Caco-2 (cell line): ENCODE measurements at regions of chr4 and their contacts with region 1.

Region 1: DNA sequence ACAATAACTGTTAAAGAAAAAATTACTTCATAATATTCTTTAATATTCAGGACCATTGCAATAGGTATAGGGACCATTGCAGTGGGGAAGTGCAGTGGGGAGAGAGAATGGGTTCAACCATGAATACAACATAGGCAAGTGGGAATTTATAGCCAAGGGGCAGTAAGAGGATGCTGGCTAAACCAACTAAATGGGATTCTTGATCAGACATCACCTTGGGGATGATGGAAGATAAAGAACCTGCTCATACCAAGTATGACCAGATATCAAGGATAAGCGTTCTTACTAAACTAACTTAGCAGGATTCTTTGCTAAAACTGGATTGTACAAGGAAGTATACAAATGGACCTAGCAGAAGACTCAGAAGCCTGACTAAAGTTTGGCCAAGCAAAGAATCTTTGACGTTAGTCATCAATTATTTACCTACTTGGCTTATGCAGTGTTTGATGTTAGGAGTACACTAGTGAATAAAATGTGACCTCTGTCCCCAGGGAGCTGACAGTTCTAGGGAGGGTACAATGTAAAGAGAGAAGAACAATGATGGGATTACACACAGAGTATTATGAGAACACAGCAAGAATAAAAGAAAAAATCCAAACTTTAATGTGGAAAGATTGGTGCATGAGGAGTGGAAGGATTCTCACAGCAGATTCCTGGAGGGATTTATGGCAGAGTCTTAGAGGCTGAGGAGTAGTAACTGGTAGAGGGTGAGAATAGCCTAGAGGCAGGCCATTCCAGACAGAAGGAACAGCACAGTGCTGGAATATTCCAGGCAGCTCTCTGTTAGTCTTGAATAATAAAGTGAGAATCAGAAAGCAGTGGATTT is 54.7 kb upstream of the MYOZ2 start:
- DNase-seq: peak; percentile 80 to 82
- H3K4me3 ChIP-seq: no peak overlapping the region
- H3K4me3 Mint-ChIP-seq: peak overlapping the region; percentile 34
- H3K27ac Mint-ChIP-seq: peak overlapping the region; percentile 86
- H3K4me1 ChIP-seq: peaks cover 37% of the 10 kb centered on the region
- H3K4me1 Mint-ChIP-seq: peaks cover 23% of the 10 kb centered on the region
- H3K27me3 ChIP-seq: no peaks in the 10 kb centered on the region
- H3K27me3 Mint-ChIP-seq: no peaks in the 10 kb centered on the region
- CTCF ChIP-seq: no peak

Region 2: GRCh38 chr4:119041951-119042560 is 38.9 kb before region 1 on chr4:
- CTCF ChIA-PET with region 1: interaction called, 4 read pairs
- POLR2A ChIA-PET with region 1: no interaction called
- intact Hi-C with region 1: loop called (anchors 1 kb)
- DNase-seq: peak; percentile 72 to 78
- H3K4me3 ChIP-seq: no peak overlapping the region
- H3K4me3 Mint-ChIP-seq: no peak overlapping the region
- H3K27ac Mint-ChIP-seq: no peak overlapping the region
- H3K4me1 ChIP-seq: peaks cover 10% of the 10 kb centered on the region
- H3K4me1 Mint-ChIP-seq: peaks cover 20% of the 10 kb centered on the region
- H3K27me3 ChIP-seq: no peaks in the 10 kb centered on the region
- H3K27me3 Mint-ChIP-seq: no peaks in the 10 kb centered on the region
- CTCF ChIP-seq: peak; percentile 62 to 77

Region 3: GRCh38 chr4:119103263-119103662 is 22.3 kb after region 1 on chr4:
- CTCF ChIA-PET with region 1: no interaction called
- POLR2A ChIA-PET with region 1: no interaction called
- intact Hi-C with region 1: loop called (anchors 1 kb)
- DNase-seq: peak in 1 of 2 experiments; percentile 38
- H3K4me3 ChIP-seq: no peak overlapping the region
- H3K4me3 Mint-ChIP-seq: no peak overlapping the region
- H3K27ac Mint-ChIP-seq: peak overlapping the region; percentile 86
- H3K4me1 ChIP-seq: peaks cover 44% of the 10 kb centered on the region
- H3K4me1 Mint-ChIP-seq: peaks cover 18% of the 10 kb centered on the region
- H3K27me3 ChIP-seq: no peaks in the 10 kb centered on the region
- H3K27me3 Mint-ChIP-seq: no peaks in the 10 kb centered on the region
- CTCF ChIP-seq: no peak

Region 4: GRCh38 chr4:119130365-119131065 is 49.6 kb after region 1 on chr4:
- CTCF ChIA-PET with region 1: no interaction called
- POLR2A ChIA-PET with region 1: no interaction called
- intact Hi-C with region 1: loop called (anchors 2 kb)
- DNase-seq: no peak
- H3K4me3 ChIP-seq: no peak overlapping the region
- H3K4me3 Mint-ChIP-seq: peak overlapping the region; percentile 69
- H3K27ac Mint-ChIP-seq: peak overlapping the region; percentile 96
- H3K4me1 ChIP-seq: peaks cover 34% of the 10 kb centered on the region
- H3K4me1 Mint-ChIP-seq: peaks cover 44% of the 10 kb centered on the region
- H3K27me3 ChIP-seq: no peaks in the 10 kb centered on the region
- H3K27me3 Mint-ChIP-seq: no peaks in the 10 kb centered on the region
- CTCF ChIP-seq: no peak

Region 5: DNA sequence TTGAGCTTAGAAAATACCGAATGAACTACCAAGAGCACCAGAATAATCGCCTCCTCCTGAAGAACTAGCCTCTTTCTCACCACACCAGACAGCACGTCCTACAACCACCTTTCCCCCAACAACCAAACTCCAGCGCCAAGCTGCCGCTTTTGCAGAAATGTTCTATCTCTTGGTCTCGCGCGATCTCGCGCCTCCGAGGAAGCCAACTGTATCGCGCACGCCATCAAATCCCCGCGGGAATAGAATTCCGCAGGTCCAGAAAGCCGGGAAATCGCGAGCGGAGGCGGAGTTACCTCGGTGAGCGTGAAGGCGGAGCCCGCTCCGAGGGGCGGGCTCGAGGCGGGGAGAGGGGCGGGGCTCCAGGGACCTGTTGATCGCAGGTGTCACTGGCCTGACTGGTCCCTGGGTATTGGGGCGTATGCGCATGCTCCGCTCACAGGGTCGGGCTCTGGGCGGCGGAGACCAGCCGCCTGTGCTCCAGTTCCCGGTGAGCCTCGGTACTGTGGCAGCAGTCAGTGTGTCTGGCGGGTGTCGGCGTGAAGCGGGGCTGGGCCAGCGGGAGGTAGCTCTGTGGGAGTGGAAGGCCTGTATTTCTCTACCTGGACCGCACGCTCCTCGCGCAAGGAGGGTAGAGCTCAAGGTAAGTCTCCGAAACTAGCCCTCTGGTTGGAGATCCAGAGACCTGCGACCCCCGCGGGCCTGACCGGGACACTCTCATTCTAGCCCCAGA is 131.5 kb after region 1 on chr4 and contains the start of gene USP53:
- CTCF ChIA-PET with region 1: interaction called, 4 read pairs
- POLR2A ChIA-PET with region 1: interaction called, 4 read pairs
- intact Hi-C with region 1: loop called (anchors 1 kb)
- DNase-seq: peak; percentile 98 to 99
- H3K4me3 ChIP-seq: peak within 1 kb of the TSS; percentile 77
- H3K4me3 Mint-ChIP-seq: peak within 1 kb of the TSS; percentile 95
- H3K27ac Mint-ChIP-seq: peak within 1 kb of the TSS; percentile 99
- H3K4me1 ChIP-seq: peaks cover 12% of the 10 kb centered on the region
- H3K4me1 Mint-ChIP-seq: peaks cover 28% of the 10 kb centered on the region
- H3K27me3 ChIP-seq: no peaks in the 10 kb centered on the region
- H3K27me3 Mint-ChIP-seq: no peaks in the 10 kb centered on the region
- CTCF ChIP-seq: no peak
- total RNA-seq, gene USP53: 45.3 and 49.3 TPM in 2 replicates